ENCODE measurements at regions of chr21 and their contacts with region 1.

Region 1: GRCh38 chr21:14864211-14865021 is 200.4 kb downstream of the NRIP1 start:
- DNase-seq: peak; percentile 57 to 78 (median 72)
- ATAC-seq: peak; percentile 84 to 95 (median 94)
- H3K4me3 ChIP-seq: no peak overlapping the region
- H3K27ac ChIP-seq: peak overlapping the region in 2 of 12 donors; percentile 17 to 30
- H3K4me1 ChIP-seq: peaks cover 0 to 52% (median 4%) of the 10 kb centered on the region in 12 donors
- H3K27me3 ChIP-seq: no peaks in the 10 kb centered on the region
- CTCF ChIP-seq: peak; percentile 51 to 72 (median 59)
- POLR2A ChIP-seq: no peak

Region 2: GRCh38 chr21:14259747-14260146 is 604.7 kb before region 1 on chr21:
- intact Hi-C with region 1: loop called in 2 of 10 experiments (anchors 5 to 10 kb)
- DNase-seq: no peak
- ATAC-seq: peak in 3 of 4 donors; percentile 53 to 70 (median 62)
- H3K4me3 ChIP-seq: no peak overlapping the region
- H3K27ac ChIP-seq: no peak overlapping the region
- H3K4me1 ChIP-seq: no peaks in the 10 kb centered on the region
- H3K27me3 ChIP-seq: peaks cover 0 to 6% (median 0%) of the 10 kb centered on the region in 9 donors
- CTCF ChIP-seq: peak; percentile 37 to 73 (median 53)
- POLR2A ChIP-seq: no peak

Region 3: GRCh38 chr21:14825514-14825974 is 38.9 kb before region 1 on chr21:
- intact Hi-C with region 1: no loop called
- DNase-seq: no peak
- ATAC-seq: no peak
- H3K4me3 ChIP-seq: no peak overlapping the region
- H3K27ac ChIP-seq: no peak overlapping the region
- H3K4me1 ChIP-seq: no peaks in the 10 kb centered on the region
- H3K27me3 ChIP-seq: no peaks in the 10 kb centered on the region
- CTCF ChIP-seq: no peak
- POLR2A ChIP-seq: no peak

Region 4: GRCh38 chr21:14968821-14969220 is 104.4 kb after region 1 on chr21:
- intact Hi-C with region 1: loop called in 1 of 10 experiments (anchors 10 kb)
- DNase-seq: no peak
- ATAC-seq: no peak
- H3K4me3 ChIP-seq: no peak overlapping the region
- H3K27ac ChIP-seq: no peak overlapping the region
- H3K4me1 ChIP-seq: no peaks in the 10 kb centered on the region
- H3K27me3 ChIP-seq: no peaks in the 10 kb centered on the region
- CTCF ChIP-seq: no peak
- POLR2A ChIP-seq: no peak

Region 5: DNA sequence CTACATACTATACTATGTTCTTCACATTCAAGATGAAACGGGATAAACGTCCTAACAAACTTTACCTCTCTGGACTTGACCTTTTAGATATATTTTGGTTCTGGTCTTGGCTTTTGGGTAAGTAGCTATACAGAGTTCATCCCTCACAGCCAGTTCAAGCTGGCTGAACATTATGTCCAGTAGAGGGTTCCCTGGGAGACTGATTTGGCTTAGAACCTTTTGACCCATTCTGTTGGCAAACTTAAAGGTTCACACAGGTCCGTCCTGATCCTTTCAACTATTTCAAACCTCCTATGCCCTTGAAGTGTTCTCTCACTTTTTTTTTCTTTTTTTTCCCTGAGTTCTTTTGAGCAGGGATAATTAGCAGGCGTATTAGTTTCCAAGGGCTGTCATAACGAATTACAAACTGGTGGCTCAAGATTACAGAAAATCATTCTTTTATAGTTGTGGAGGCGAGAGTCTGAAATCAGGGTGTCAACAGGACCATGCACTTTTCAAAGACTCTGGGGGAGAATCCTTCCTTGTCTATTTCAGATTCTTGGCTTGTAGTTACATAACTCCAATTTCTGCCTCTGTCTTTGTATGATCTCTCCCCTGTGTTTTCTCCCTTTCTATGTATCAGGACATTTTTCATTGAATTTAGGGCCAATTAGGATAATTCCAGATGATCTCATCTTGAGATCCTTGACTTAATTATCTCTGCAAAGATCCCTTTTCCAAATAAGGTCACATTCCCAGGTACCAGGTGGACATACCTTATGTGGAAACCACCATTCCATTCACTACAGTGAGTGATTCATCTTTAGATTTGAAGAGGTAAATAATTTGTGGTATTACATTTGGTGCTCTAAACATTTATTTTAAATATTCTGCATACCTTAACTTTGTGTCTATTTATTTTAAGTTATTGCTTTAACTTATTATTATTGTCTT is 608.0 kb after region 1 on chr21:
- intact Hi-C with region 1: loop called in 1 of 10 experiments (anchors 5 kb)
- DNase-seq: no peak
- ATAC-seq: no peak
- H3K4me3 ChIP-seq: no peak overlapping the region
- H3K27ac ChIP-seq: no peak overlapping the region
- H3K4me1 ChIP-seq: peaks cover 0 to 7% (median 0%) of the 10 kb centered on the region in 12 donors
- H3K27me3 ChIP-seq: no peaks in the 10 kb centered on the region
- CTCF ChIP-seq: no peak
- POLR2A ChIP-seq: no peak

Region 6: GRCh38 chr21:15592271-15592860 is 728.0 kb after region 1 on chr21:
- intact Hi-C with region 1: loop called in 6 of 10 experiments (anchors 5 kb)
- DNase-seq: no peak
- ATAC-seq: peak in 1 of 4 donors; percentile 50
- H3K4me3 ChIP-seq: no peak overlapping the region
- H3K27ac ChIP-seq: no peak overlapping the region
- H3K4me1 ChIP-seq: no peaks in the 10 kb centered on the region
- H3K27me3 ChIP-seq: no peaks in the 10 kb centered on the region
- CTCF ChIP-seq: peak in 11 of 12 donors; percentile 28 to 68 (median 57)
- POLR2A ChIP-seq: no peak

Measured in heart left ventricle (tissue), 16 donors.